ENCODE measurements at regions of chr3 and their contacts with region 1.

Region 1: GRCh38 chr3:46368569-46368968 is 2.2 kb upstream of the CCR5 start:
- DNase-seq: peak; percentile 57
- H3K4me3 Mint-ChIP-seq: no peak overlapping the region
- H3K27ac Mint-ChIP-seq: no peak overlapping the region
- H3K4me1 Mint-ChIP-seq: no peaks in the 10 kb centered on the region
- H3K27me3 Mint-ChIP-seq: peaks cover 11% of the 10 kb centered on the region
- CTCF ChIP-seq: peak; percentile 28

Region 2: GRCh38 chr3:46089237-46090011 is 279.1 kb before region 1 on chr3:
- CTCF ChIA-PET with region 1: interaction called, 202 read pairs
- POLR2A ChIA-PET with region 1: interaction called, 3 read pairs
- intact Hi-C with region 1: loop called (anchors 1 kb)
- DNase-seq: peak; percentile 77
- H3K4me3 Mint-ChIP-seq: no peak overlapping the region
- H3K27ac Mint-ChIP-seq: peak overlapping the region; percentile 28
- H3K4me1 Mint-ChIP-seq: peaks cover 4% of the 10 kb centered on the region
- H3K27me3 Mint-ChIP-seq: no peaks in the 10 kb centered on the region
- CTCF ChIP-seq: no peak

Region 3: GRCh38 chr3:46163318-46164041 is 205.1 kb before region 1 on chr3:
- CTCF ChIA-PET with region 1: no interaction called
- POLR2A ChIA-PET with region 1: no interaction called
- intact Hi-C with region 1: no loop called
- DNase-seq: peak; percentile 78
- H3K4me3 Mint-ChIP-seq: peak overlapping the region; percentile 51
- H3K27ac Mint-ChIP-seq: peak overlapping the region; percentile 88
- H3K4me1 Mint-ChIP-seq: peaks cover 21% of the 10 kb centered on the region
- H3K27me3 Mint-ChIP-seq: no peaks in the 10 kb centered on the region
- CTCF ChIP-seq: no peak

Region 4: DNA sequence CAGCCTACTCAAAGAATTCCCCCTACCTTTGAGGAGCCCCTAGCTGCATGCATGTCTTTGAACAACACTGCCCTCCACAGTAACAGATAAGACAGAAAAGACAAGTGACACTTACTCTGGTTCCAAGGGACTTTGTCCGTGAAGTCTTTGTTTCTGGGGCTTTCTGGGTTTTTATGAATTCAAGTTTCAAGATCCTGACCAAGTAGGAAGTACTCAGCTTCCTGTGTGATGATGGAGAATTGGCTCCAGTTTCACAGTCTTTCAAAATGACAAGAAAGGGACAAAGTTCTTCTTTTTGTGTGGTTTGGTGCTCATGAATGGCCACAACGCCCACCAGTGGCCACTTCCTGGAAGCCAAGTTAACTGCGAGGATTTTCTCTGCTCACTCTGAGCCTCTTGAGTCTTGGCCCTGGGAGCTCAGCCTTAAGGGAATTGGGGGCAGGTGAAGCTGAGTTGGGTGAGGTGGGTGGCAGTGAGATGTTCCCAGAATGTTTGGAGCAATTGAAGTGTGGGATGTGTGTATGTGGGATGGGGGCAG is 160.3 kb before region 1 on chr3 and contains the start of gene CCR1:
- CTCF ChIA-PET with region 1: interaction called, 89 read pairs
- POLR2A ChIA-PET with region 1: interaction called, 3 read pairs
- intact Hi-C with region 1: no loop called
- DNase-seq: peak; percentile 62
- H3K4me3 Mint-ChIP-seq: no peak within 1 kb of the TSS
- H3K27ac Mint-ChIP-seq: no peak within 1 kb of the TSS
- H3K4me1 Mint-ChIP-seq: no peaks in the 10 kb centered on the region
- H3K27me3 Mint-ChIP-seq: no peaks in the 10 kb centered on the region
- CTCF ChIP-seq: peak; percentile 46
- total RNA-seq, gene CCR1: not detected in 2 replicates

Region 5: GRCh38 chr3:46276502-46277099 is 92.0 kb before region 1 on chr3:
- CTCF ChIA-PET with region 1: interaction called, 5 read pairs
- POLR2A ChIA-PET with region 1: no interaction called
- intact Hi-C with region 1: loop called (anchors 1 kb)
- DNase-seq: peak; percentile 69
- H3K4me3 Mint-ChIP-seq: no peak overlapping the region
- H3K27ac Mint-ChIP-seq: no peak overlapping the region
- H3K4me1 Mint-ChIP-seq: peaks cover 7% of the 10 kb centered on the region
- H3K27me3 Mint-ChIP-seq: no peaks in the 10 kb centered on the region
- CTCF ChIP-seq: peak; percentile 49

Region 6: GRCh38 chr3:46558184-46559043 is 189.8 kb after region 1 on chr3:
- CTCF ChIA-PET with region 1: no interaction called
- POLR2A ChIA-PET with region 1: no interaction called
- intact Hi-C with region 1: loop called (anchors 1 kb)
- DNase-seq: peak; percentile 84
- H3K4me3 Mint-ChIP-seq: no peak overlapping the region
- H3K27ac Mint-ChIP-seq: peak overlapping the region; percentile 88
- H3K4me1 Mint-ChIP-seq: peaks cover 16% of the 10 kb centered on the region
- H3K27me3 Mint-ChIP-seq: no peaks in the 10 kb centered on the region
- CTCF ChIP-seq: peak; percentile 83

Region 7: DNA sequence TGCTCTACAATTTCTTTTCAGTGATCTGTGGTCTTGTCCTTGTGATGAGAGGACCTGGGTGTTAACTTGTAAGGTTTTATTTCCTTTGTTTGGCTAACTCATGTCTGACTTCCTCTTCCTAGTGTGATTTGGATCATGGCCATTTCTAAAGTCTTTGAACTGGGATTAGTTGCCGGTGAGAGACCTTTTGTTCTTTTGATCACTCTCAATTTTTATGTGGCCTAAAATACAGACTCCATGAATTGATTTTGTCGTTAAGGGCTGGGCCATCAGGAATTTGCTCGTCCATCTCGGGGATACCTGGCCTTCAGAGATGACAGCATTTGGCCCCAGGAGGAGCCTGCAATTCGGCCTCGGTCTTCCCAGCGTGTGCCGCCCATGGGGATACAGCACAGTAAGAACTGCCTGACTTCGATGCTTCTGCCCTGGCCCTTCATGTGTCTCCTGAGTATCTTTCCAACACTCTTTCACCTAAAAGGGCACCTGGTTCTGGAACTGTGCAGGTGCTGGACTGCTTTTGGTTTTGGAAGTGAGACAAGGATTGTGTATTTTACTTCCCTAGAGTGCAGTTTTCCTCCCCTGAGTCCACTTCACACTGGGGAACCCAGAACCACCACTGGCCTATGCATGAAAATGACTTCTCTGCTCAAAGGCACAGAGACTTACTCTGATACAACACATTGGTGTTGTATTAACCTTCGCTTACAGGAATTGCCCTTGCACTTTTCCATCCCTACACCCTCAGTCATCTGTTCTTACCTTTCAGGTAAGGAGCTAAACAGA is 210.6 kb after region 1 on chr3:
- CTCF ChIA-PET with region 1: no interaction called
- POLR2A ChIA-PET with region 1: no interaction called
- intact Hi-C with region 1: no loop called
- DNase-seq: no peak
- H3K4me3 Mint-ChIP-seq: no peak overlapping the region
- H3K27ac Mint-ChIP-seq: no peak overlapping the region
- H3K4me1 Mint-ChIP-seq: no peaks in the 10 kb centered on the region
- H3K27me3 Mint-ChIP-seq: no peaks in the 10 kb centered on the region
- CTCF ChIP-seq: no peak

Region 8: DNA sequence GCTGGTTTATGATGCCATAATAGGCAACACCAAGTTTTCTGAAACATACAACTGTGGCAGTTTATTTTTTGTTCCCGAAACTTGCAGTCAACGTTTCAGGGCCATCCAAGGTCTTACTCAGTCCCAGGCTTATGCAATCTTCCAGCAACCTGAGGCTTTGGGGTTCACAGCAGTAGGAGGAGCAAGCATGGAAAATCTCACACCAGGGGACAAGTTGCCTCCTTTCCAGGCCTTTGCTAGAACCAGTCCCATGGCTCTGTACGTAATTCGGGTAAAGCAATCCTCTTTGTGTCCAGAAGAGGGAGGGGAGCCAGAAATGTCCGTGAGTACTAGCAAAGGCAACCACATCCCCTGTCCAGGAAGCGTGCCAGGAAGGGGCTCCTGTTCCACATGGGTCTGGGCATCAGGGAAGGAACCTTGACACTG is 239.0 kb after region 1 on chr3:
- CTCF ChIA-PET with region 1: no interaction called
- POLR2A ChIA-PET with region 1: no interaction called
- intact Hi-C with region 1: no loop called
- DNase-seq: peak; percentile 6
- H3K4me3 Mint-ChIP-seq: no peak overlapping the region
- H3K27ac Mint-ChIP-seq: no peak overlapping the region
- H3K4me1 Mint-ChIP-seq: no peaks in the 10 kb centered on the region
- H3K27me3 Mint-ChIP-seq: peaks cover 11% of the 10 kb centered on the region
- CTCF ChIP-seq: no peak